ENCODE measurements at regions of chr3 and their contacts with region 1.

Region 1: DNA sequence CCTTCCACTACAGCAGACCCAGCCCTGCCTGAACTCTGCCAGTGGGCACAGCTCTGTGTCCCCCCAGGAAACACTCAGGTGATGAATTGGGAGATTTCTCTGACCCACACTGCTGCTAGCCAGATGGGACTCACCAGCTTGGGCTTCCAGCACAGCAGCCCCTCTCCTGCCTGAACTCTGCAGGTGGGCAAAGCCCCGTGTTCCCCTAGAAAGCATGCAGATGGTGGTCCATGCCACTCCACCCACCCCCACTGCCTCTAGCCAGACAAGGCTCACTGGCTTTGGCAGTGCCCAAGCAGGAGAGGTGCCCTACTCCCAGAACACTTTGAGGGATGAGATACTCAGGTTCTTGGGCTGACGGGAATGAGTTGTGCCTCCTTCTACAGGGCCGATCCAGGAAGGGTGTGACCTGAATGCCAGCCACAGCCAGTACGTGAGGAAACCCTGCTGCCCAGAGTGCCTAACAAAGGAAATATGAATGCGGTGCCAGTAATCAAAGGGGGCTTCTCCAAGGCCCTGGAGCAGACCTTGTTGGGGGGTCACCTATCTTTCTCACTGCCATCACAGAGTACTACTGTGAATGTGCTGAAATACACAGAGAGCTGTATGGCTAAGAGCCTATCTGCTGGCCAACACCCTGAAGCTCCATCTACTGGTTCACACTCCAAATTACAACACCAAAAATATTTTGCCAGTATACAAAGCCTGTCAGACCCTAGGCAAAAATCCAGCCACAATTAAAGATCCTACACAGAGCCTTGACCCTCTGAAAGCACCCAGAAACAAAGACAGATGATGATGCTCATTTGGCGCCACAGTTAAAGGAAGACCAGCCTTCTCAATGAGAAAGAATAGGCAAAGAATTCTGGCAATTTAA is 61.9 kb downstream of the BTLA start:
- DNase-seq: no peak
- H3K4me3 ChIP-seq: no peak overlapping the region
- H3K27ac ChIP-seq: no peak overlapping the region
- H3K4me1 ChIP-seq: no peaks in the 10 kb centered on the region
- H3K27me3 ChIP-seq: no peaks in the 10 kb centered on the region
- CTCF ChIP-seq: peak; percentile 53; the same call in 1 of the 2 replicates

Region 2: GRCh38 chr3:112327371-112327951 is 109.9 kb before region 1 on chr3:
- CTCF ChIA-PET with region 1: interaction called, 4 read pairs
- POLR2A ChIA-PET with region 1: no interaction called
- intact Hi-C with region 1: loop called (anchors 2 kb)
- DNase-seq: peak in 1 of 2 experiments; percentile 11
- H3K4me3 ChIP-seq: no peak overlapping the region
- H3K27ac ChIP-seq: no peak overlapping the region
- H3K4me1 ChIP-seq: no peaks in the 10 kb centered on the region
- H3K27me3 ChIP-seq: no peaks in the 10 kb centered on the region
- CTCF ChIP-seq: peak; percentile 66

Region 3: GRCh38 chr3:112338021-112338726 is 99.2 kb before region 1 on chr3:
- CTCF ChIA-PET with region 1: no interaction called
- POLR2A ChIA-PET with region 1: no interaction called
- intact Hi-C with region 1: no loop called
- DNase-seq: no peak
- H3K4me3 ChIP-seq: no peak overlapping the region
- H3K27ac ChIP-seq: no peak overlapping the region
- H3K4me1 ChIP-seq: no peaks in the 10 kb centered on the region
- H3K27me3 ChIP-seq: no peaks in the 10 kb centered on the region
- CTCF ChIP-seq: no peak

Measured in PC-9 (cell line).